A549 (cell line): ENCODE measurements at regions of chr17 and their contacts with region 1.

Region 1: GRCh38 chr17:4782652-4783051 is 3.5 kb downstream of the VMO1 start:
- DNase-seq: no peak
- ATAC-seq: peak in 1 of 2 experiments; percentile 11; a peak in 1 of 6 replicates
- H3K4me3 ChIP-seq: no peak overlapping the region
- H3K27ac ChIP-seq: no peak overlapping the region
- H3K4me1 ChIP-seq: peaks cover 13% of the 10 kb centered on the region; the same call in 2 of the 3 replicates
- CTCF ChIP-seq: no peak
- EP300 ChIP-seq: no peak
- POLR2A ChIP-seq: no peak
- RAD21 ChIP-seq: no peak

Region 2: GRCh38 chr17:4771519-4772234 is 11.0 kb before region 1 on chr17 and contains the start of gene TM4SF5:
- CTCF ChIA-PET with region 1: interaction called, 157 read pairs
- POLR2A ChIA-PET with region 1: no interaction called
- DNase-seq: peak in 1 of 2 experiments; percentile 60
- ATAC-seq: peak; percentile 79 to 84
- H3K4me3 ChIP-seq: no peak within 1 kb of the TSS
- H3K27ac ChIP-seq: peak within 1 kb of the TSS in 1 of 2 experiments; percentile 53; a peak in 4 of 6 replicates
- H3K4me1 ChIP-seq: peaks cover 15% of the 10 kb centered on the region
- CTCF ChIP-seq: no peak
- EP300 ChIP-seq: no peak
- POLR2A ChIP-seq: no peak
- RAD21 ChIP-seq: no peak
- polyA plus RNA-seq, gene TM4SF5: 0.80 and 1.2 TPM in 2 replicates